Endothelial cell of umbilical vein (primary cell): ENCODE measurements at regions of chr5 and their contacts with region 1.

Region 1: GRCh38 chr5:96565582-96566265 is 96.5 kb upstream of the CAST start:
- DNase-seq: peak; percentile 79
- H3K4me3 ChIP-seq: no peak overlapping the region
- H3K27ac ChIP-seq: peak overlapping the region; percentile 97
- H3K4me1 ChIP-seq: peaks cover 71% of the 10 kb centered on the region
- H3K27me3 ChIP-seq: no peaks in the 10 kb centered on the region
- CTCF ChIP-seq: no peak
- POLR2A ChIP-seq: no peak

Region 2: DNA sequence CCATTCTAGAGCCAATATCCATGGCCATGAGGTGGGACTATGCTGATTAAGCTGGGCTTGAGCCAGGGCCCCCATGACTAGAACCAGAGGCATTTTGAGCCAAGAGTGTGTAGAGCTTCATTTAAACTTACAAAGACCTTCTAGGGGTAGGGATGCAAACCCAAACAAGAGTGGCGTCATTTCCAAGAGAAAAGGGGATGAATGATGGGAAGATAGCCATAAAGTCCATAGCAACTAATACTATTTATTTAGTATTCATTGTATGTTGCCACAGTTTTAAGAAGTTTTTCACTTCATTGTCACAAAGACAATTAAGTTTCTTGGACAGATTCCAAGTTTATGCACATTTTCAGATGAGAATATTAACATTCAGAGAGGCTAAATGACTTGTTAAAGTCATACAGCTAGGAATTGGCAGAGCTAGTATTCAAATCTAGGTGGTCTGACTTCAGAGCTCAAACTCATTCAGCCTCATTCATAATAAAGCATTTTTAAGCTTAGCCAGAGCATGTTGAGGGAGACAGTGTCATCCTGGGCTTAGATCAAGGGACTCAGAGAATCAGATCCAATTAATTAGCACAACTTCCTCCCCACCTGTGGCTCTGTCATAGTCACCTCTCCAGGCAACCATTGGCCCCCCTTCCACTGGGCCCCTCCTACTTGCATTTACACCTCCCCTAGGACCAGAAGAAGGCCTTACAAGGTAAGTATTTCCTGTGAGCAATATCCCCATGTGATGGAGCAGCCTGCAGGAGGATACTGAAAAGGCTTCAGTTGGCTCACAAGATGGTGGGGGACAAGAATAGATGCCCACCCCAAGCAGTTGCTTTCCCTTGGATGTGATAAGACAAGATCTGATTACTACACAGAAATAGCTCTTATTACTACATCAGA is 37.7 kb before region 1 on chr5:
- CTCF ChIA-PET with region 1: no interaction called
- POLR2A ChIA-PET with region 1: no interaction called
- dilution Hi-C with region 1: no loop called
- intact Hi-C with region 1: loop called (anchors 2 kb)
- DNase-seq: peak; percentile 57
- H3K4me3 ChIP-seq: no peak overlapping the region
- H3K27ac ChIP-seq: no peak overlapping the region
- H3K4me1 ChIP-seq: peaks cover 19% of the 10 kb centered on the region
- H3K27me3 ChIP-seq: no peaks in the 10 kb centered on the region
- CTCF ChIP-seq: no peak
- POLR2A ChIP-seq: no peak

Region 3: DNA sequence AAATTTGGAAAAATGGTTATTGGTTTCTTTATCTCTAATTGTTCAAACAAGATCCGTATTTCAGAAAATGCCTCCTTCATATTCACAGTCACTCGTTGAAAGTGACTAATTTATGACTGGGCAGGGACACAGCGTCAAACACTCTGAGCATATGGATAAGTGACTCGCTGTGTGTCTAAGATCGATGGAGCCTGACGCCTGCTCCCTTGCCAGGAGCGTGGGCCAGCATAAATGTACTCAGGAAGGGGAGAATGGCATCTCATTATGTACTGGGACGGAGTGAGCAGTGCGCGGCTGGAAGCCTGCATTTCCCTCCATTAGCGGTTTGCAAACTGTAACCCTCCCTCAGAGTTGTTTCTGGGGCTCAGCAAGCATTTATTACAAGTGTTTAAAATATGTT is 16.6 kb after region 1 on chr5:
- CTCF ChIA-PET with region 1: interaction called, 7 read pairs
- POLR2A ChIA-PET with region 1: interaction called, 7 read pairs
- dilution Hi-C with region 1: no loop called
- intact Hi-C with region 1: loop called (anchors 1 kb)
- DNase-seq: peak; percentile 64
- H3K4me3 ChIP-seq: no peak overlapping the region
- H3K27ac ChIP-seq: peak overlapping the region; percentile 86
- H3K4me1 ChIP-seq: peaks cover 67% of the 10 kb centered on the region
- H3K27me3 ChIP-seq: no peaks in the 10 kb centered on the region
- CTCF ChIP-seq: no peak
- POLR2A ChIP-seq: no peak

Region 4: GRCh38 chr5:96601811-96602244 is 36.1 kb after region 1 on chr5:
- CTCF ChIA-PET with region 1: interaction called, 16 read pairs
- POLR2A ChIA-PET with region 1: no interaction called
- dilution Hi-C with region 1: no loop called
- intact Hi-C with region 1: loop called (anchors 1 kb)
- DNase-seq: peak; percentile 87
- H3K4me3 ChIP-seq: peak overlapping the region in 1 of 3 experiments; percentile 21
- H3K27ac ChIP-seq: peak overlapping the region; percentile 90
- H3K4me1 ChIP-seq: peaks cover 43% of the 10 kb centered on the region
- H3K27me3 ChIP-seq: no peaks in the 10 kb centered on the region
- CTCF ChIP-seq: peak; percentile 71
- POLR2A ChIP-seq: no peak

Region 5: DNA sequence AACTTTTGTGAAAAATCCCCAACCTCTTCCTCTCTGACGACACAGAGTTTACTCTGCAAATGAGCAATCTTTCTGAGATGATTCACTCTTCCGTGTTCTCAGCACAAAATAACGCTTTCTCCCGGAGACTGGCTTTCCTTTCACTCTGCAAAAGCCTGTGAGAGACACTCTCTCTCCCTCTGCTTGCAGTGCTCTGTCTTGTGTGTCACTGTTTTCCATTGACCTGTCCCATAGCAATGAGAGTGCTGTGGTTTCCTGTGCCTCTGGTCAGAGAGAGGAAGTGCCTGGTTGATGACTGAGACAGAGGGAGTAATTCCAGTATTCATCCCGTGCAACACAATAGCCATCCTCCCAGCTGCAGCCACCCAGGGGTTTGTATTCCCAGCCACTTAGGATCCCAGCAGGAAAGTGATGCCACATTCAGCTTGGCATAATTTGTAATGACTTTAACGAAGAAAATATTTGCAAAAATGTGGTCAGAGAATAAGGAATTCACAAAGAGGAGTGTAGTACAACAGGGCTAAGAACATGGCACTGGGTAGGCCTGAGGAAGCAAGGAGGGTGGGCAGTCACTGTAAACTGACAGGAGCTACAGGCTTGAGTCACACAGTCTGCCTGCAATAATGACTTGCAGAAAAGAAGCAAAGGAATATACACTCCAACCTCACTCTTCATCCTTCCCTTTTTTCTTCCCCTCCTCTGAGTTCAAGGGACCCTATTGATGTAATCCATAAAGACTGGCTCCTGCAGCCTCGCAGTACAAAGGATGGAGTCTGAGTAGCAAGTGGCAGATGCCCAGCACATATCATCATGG is 1744.3 kb after region 1 on chr5:
- CTCF ChIA-PET with region 1: no interaction called
- POLR2A ChIA-PET with region 1: no interaction called
- dilution Hi-C with region 1: no loop called
- intact Hi-C with region 1: loop called (anchors 5 kb)
- DNase-seq: peak; percentile 95
- H3K4me3 ChIP-seq: peak overlapping the region in 2 of 3 experiments; percentile 10 to 72
- H3K27ac ChIP-seq: peak overlapping the region; percentile 97
- H3K4me1 ChIP-seq: peaks cover 63% of the 10 kb centered on the region
- H3K27me3 ChIP-seq: no peaks in the 10 kb centered on the region
- CTCF ChIP-seq: no peak
- POLR2A ChIP-seq: no peak